ENCODE measurements at regions of chr1 and their contacts with region 1.

Region 1: GRCh38 chr1:224851210-224851847 is 78.1 kb upstream of the DNAH14 start:
- DNase-seq: peak; percentile 74
- ATAC-seq: peak; percentile 56
- H3K4me3 Mint-ChIP-seq: no peak overlapping the region
- H3K27ac Mint-ChIP-seq: no peak overlapping the region
- H3K4me1 Mint-ChIP-seq: no peaks in the 10 kb centered on the region
- H3K27me3 Mint-ChIP-seq: no peaks in the 10 kb centered on the region
- CTCF ChIP-seq: peak; percentile 78

Region 2: GRCh38 chr1:224644553-224645154 is 206.7 kb before region 1 on chr1:
- CTCF ChIA-PET with region 1: interaction called, 11 read pairs
- POLR2A ChIA-PET with region 1: no interaction called
- intact Hi-C with region 1: no loop called
- DNase-seq: peak; percentile 65
- ATAC-seq: peak; percentile 89
- H3K4me3 Mint-ChIP-seq: no peak overlapping the region
- H3K27ac Mint-ChIP-seq: no peak overlapping the region
- H3K4me1 Mint-ChIP-seq: no peaks in the 10 kb centered on the region
- H3K27me3 Mint-ChIP-seq: no peaks in the 10 kb centered on the region
- CTCF ChIP-seq: peak; percentile 83

Region 3: DNA sequence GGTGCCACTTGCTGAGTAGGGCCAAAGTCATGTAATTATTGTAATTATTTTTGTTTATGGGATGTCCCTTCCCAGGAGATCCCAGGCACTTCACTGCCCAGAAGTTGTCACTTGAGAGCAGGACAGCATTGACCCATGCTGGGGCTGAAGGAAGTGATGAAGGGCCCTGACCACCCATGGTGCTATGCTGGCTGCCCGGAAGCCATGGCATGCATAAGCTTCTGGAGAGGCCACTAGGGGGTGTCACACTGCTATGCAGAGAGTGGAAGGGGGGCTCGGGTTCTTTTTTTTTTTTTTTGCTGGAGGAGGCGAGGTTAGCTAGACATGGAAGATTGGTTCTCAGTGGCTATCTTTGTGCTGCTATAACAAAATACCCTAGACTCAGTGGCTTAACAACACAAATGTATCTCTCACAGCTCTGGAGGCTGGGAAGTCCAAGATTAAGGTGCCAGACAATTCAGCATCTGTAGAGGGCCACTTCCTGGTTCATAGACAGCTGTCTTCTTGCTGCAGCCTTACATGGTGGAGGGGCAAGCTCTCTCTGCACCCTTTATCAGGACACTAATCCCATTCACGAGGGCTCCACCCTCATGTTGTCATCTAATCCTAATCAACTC is 150.3 kb before region 1 on chr1:
- CTCF ChIA-PET with region 1: interaction called, 9 read pairs
- POLR2A ChIA-PET with region 1: no interaction called
- intact Hi-C with region 1: loop called (anchors 5 kb)
- DNase-seq: peak; percentile 32
- ATAC-seq: peak; percentile 56
- H3K4me3 Mint-ChIP-seq: no peak overlapping the region
- H3K27ac Mint-ChIP-seq: no peak overlapping the region
- H3K4me1 Mint-ChIP-seq: no peaks in the 10 kb centered on the region
- H3K27me3 Mint-ChIP-seq: no peaks in the 10 kb centered on the region
- CTCF ChIP-seq: peak; percentile 53

Region 4: GRCh38 chr1:224828691-224829090 is 22.6 kb before region 1 on chr1:
- CTCF ChIA-PET with region 1: interaction called, 12 read pairs
- POLR2A ChIA-PET with region 1: interaction called, 3 read pairs
- intact Hi-C with region 1: no loop called
- DNase-seq: no peak
- ATAC-seq: no peak
- H3K4me3 Mint-ChIP-seq: no peak overlapping the region
- H3K27ac Mint-ChIP-seq: no peak overlapping the region
- H3K4me1 Mint-ChIP-seq: no peaks in the 10 kb centered on the region
- H3K27me3 Mint-ChIP-seq: peaks cover 22% of the 10 kb centered on the region
- CTCF ChIP-seq: no peak

Region 5: GRCh38 chr1:224863970-224864369 is 12.6 kb after region 1 on chr1:
- CTCF ChIA-PET with region 1: interaction called, 19 read pairs
- POLR2A ChIA-PET with region 1: no interaction called
- intact Hi-C with region 1: no loop called
- DNase-seq: no peak
- ATAC-seq: no peak
- H3K4me3 Mint-ChIP-seq: no peak overlapping the region
- H3K27ac Mint-ChIP-seq: no peak overlapping the region
- H3K4me1 Mint-ChIP-seq: no peaks in the 10 kb centered on the region
- H3K27me3 Mint-ChIP-seq: peaks cover 2% of the 10 kb centered on the region
- CTCF ChIP-seq: no peak

Region 6: GRCh38 chr1:224922404-224923164 is 71.3 kb after region 1 on chr1:
- CTCF ChIA-PET with region 1: interaction called, 12 read pairs
- POLR2A ChIA-PET with region 1: no interaction called
- intact Hi-C with region 1: no loop called
- DNase-seq: no peak
- ATAC-seq: peak; percentile 77
- H3K4me3 Mint-ChIP-seq: no peak overlapping the region
- H3K27ac Mint-ChIP-seq: no peak overlapping the region
- H3K4me1 Mint-ChIP-seq: no peaks in the 10 kb centered on the region
- H3K27me3 Mint-ChIP-seq: peaks cover 10% of the 10 kb centered on the region
- CTCF ChIP-seq: peak; percentile 68